H1 (cell line): ENCODE measurements at regions of chr5 and their contacts with region 1.

Region 1: DNA sequence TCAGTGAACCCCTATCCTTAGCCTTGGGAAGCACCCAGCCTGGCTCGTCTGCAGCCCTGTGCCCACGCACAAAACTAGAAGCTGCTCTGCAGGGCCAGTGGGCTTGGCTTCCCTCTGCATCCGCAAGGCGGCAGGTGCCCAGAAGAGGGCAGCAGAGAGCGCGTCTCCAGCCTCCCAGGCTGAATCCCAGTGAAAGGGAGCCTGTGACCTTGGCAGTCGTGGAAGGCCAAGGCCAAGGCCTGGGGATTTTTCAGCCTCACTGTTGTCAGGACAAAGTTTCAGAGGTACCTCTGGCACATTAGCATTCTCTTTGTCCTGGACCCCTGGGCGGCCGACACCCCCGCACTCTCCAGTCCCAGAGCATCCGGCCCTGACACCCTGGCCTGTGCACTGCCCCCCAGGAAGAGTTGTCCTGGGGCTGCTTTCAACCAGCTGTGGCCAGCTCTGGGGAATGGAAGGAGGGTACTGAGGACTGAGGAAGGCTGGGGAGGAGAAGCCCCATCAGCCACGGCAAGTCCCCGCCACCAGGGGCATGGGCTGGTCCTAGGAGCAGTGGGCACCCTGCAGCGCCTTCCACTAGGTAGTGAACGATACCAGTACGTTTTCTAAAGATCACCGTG is 63.6 kb upstream of the IL17B start:
- DNase-seq: peak; percentile 61 to 99
- H3K4me3 ChIP-seq: no peak overlapping the region
- H3K27ac ChIP-seq: peak overlapping the region; percentile 38; the same call in 1 of the 2 replicates
- H3K4me1 ChIP-seq: peaks cover 0 to 17% (median 9%) of the 10 kb centered on the region in 4 experiments; a peak in 6 of 7 replicates
- H3K27me3 ChIP-seq: no peaks in the 10 kb centered on the region
- CTCF ChIP-seq: peak; percentile 92 to 96 (median 96)
- EP300 ChIP-seq: no peak
- POLR2A ChIP-seq: no peak
- RAD21 ChIP-seq: peak; percentile 79 to 86

Region 2: GRCh38 chr5:149284501-149284900 is 158.2 kb before region 1 on chr5:
- CTCF ChIA-PET with region 1: no interaction called
- POLR2A ChIA-PET with region 1: no interaction called
- DNase-seq: no peak
- H3K4me3 ChIP-seq: no peak overlapping the region
- H3K27ac ChIP-seq: no peak overlapping the region
- H3K4me1 ChIP-seq: no peaks in the 10 kb centered on the region
- H3K27me3 ChIP-seq: no peaks in the 10 kb centered on the region; a peak in 1 of 7 replicates
- CTCF ChIP-seq: no peak
- EP300 ChIP-seq: no peak
- POLR2A ChIP-seq: no peak
- RAD21 ChIP-seq: no peak

Region 3: GRCh38 chr5:149406203-149406978 is 36.3 kb before region 1 on chr5:
- CTCF ChIA-PET with region 1: interaction called, 315 read pairs
- POLR2A ChIA-PET with region 1: no interaction called
- DNase-seq: no peak
- H3K4me3 ChIP-seq: no peak overlapping the region
- H3K27ac ChIP-seq: no peak overlapping the region
- H3K4me1 ChIP-seq: peaks cover 0 to 10% (median 5%) of the 10 kb centered on the region in 4 experiments; a peak in 4 of 7 replicates
- H3K27me3 ChIP-seq: no peaks in the 10 kb centered on the region; a peak in 1 of 7 replicates
- CTCF ChIP-seq: peak in 1 of 3 experiments; percentile 9; a peak in 1 of 4 replicates
- EP300 ChIP-seq: no peak
- POLR2A ChIP-seq: no peak
- RAD21 ChIP-seq: no peak

Region 4: DNA sequence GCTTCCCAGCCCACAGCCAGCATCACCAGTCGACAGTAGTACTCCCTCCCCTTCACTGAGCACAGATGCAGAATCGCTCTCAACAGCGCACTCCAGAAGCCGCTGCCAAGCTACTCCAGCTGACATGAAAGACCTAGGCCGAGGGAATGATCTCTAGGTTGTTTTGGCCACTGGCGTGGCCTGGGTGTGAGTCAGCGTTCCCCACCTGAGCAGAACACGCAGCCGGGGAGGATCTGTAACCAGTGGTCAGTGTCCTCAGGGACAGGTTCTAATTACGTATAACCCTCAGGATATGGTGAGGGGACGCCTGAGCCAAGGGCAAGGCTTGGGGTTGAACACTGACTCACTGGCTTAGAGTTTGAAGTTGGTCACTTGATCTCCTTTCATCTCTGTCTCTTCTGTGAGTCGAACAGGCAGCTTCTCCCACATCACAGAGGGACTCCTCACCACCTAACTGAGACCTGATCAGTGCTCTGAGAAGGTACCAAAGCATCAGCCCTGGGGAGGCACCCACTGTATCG is 13.3 kb after region 1 on chr5:
- CTCF ChIA-PET with region 1: interaction called, 90 read pairs
- POLR2A ChIA-PET with region 1: interaction called, 7 read pairs
- DNase-seq: no peak
- H3K4me3 ChIP-seq: no peak overlapping the region
- H3K27ac ChIP-seq: no peak overlapping the region
- H3K4me1 ChIP-seq: peaks cover 0 to 10% (median 3%) of the 10 kb centered on the region in 4 experiments; a peak in 4 of 7 replicates
- H3K27me3 ChIP-seq: no peaks in the 10 kb centered on the region
- CTCF ChIP-seq: no peak
- EP300 ChIP-seq: no peak
- POLR2A ChIP-seq: no peak
- RAD21 ChIP-seq: no peak

Region 5: GRCh38 chr5:149474212-149474618 is 31.5 kb after region 1 on chr5:
- CTCF ChIA-PET with region 1: interaction called, 25 read pairs
- POLR2A ChIA-PET with region 1: no interaction called
- DNase-seq: no peak
- H3K4me3 ChIP-seq: no peak overlapping the region
- H3K27ac ChIP-seq: no peak overlapping the region
- H3K4me1 ChIP-seq: 0 out of 7 replicates have a peak, but pooled peaks cover 0 to 2% (median 0%) of the 10 kb centered on the region in 4 experiments
- H3K27me3 ChIP-seq: no peaks in the 10 kb centered on the region
- CTCF ChIP-seq: no peak
- EP300 ChIP-seq: no peak
- POLR2A ChIP-seq: no peak
- RAD21 ChIP-seq: no peak

Region 6: GRCh38 chr5:149551200-149552037 is 108.7 kb after region 1 on chr5 and contains the start of gene CSNK1A1:
- CTCF ChIA-PET with region 1: interaction called, 174 read pairs
- POLR2A ChIA-PET with region 1: interaction called, 8 read pairs
- DNase-seq: peak; percentile 97 to 98
- H3K4me3 ChIP-seq: peak within 1 kb of the TSS; percentile 97 to 100 (median 99)
- H3K27ac ChIP-seq: peak within 1 kb of the TSS; percentile 93
- H3K4me1 ChIP-seq: peaks cover 0 to 4% (median 2%) of the 10 kb centered on the region in 4 experiments; a peak in 4 of 7 replicates
- H3K27me3 ChIP-seq: no peaks in the 10 kb centered on the region
- CTCF ChIP-seq: peak; percentile 41 to 62 (median 44); a peak in 3 of 4 replicates
- EP300 ChIP-seq: no peak
- POLR2A ChIP-seq: peak; percentile 48 to 84
- RAD21 ChIP-seq: peak; percentile 57 to 58
- total RNA-seq, gene CSNK1A1: 244 and 254 TPM in 2 replicates

Region 7: DNA sequence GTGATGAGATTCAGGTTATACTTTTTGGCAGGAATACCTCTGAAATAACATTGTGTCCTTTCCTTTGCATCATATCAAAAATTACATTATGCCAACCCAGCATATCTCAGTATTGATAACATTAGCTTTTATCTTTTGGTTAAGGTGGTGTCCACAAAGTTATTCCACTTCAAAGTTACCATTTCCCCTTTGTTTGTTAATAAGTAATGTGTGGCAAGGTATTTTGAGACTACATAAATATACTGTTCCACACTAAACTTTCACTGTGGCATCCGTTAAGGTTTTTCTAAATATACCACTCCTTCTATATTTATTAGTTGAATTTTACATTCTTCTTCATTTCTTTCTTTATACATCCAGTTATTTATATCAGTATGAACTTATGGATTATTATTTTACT is 124.6 kb after region 1 on chr5:
- CTCF ChIA-PET with region 1: interaction called, 111 read pairs
- POLR2A ChIA-PET with region 1: interaction called, 4 read pairs
- DNase-seq: no peak
- H3K4me3 ChIP-seq: no peak overlapping the region
- H3K27ac ChIP-seq: no peak overlapping the region
- H3K4me1 ChIP-seq: peaks cover 0 to 7% (median 4%) of the 10 kb centered on the region in 4 experiments; a peak in 3 of 7 replicates
- H3K27me3 ChIP-seq: no peaks in the 10 kb centered on the region
- CTCF ChIP-seq: no peak
- EP300 ChIP-seq: no peak
- POLR2A ChIP-seq: no peak
- RAD21 ChIP-seq: no peak